PC-3 (cell line): ENCODE measurements at regions of chr2 and their contacts with region 1.

Region 1: GRCh38 chr2:102473020-102473419 is at the start of gene SLC9A4:
- DNase-seq: peak; percentile 81
- ATAC-seq: peak; percentile 53
- H3K4me3 ChIP-seq: no peak within 1 kb of the TSS
- H3K27ac ChIP-seq: no peak within 1 kb of the TSS
- H3K4me1 ChIP-seq: no peaks in the 10 kb centered on the region; the same call in 1 of the 2 replicates
- H3K27me3 ChIP-seq: no peaks in the 10 kb centered on the region
- CTCF ChIP-seq: peak; percentile 95
- total RNA-seq, gene SLC9A4: 0.04 TPM in 1 of 2 replicates, not detected in the other

Region 2: DNA sequence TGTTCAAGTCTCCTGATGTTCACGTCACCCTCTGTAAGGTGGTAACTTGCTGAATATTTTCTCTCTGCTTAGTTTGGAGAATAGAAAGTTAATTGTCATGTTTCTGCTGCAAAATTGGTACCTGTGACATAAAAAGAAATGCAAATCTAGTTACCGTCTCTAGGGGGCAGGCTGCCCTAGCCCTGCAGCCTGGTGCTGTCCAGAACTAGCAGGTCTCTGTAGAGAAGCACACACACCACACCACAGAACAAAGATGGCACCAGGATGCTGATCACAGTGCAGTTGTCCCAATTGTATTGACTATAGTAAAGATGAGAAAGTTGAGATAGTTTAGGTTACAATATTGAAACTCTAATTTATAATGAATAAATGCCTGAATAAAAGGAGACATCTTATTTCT is 47.0 kb after region 1 on chr2:
- CTCF ChIA-PET with region 1: no interaction called
- POLR2A ChIA-PET with region 1: no interaction called
- intact Hi-C with region 1: no loop called
- DNase-seq: peak; percentile 45
- ATAC-seq: 0 out of 2 replicates have a peak, but pooled peaks have one; percentile 33
- H3K4me3 ChIP-seq: no peak overlapping the region
- H3K27ac ChIP-seq: no peak overlapping the region
- H3K4me1 ChIP-seq: peaks cover 2% of the 10 kb centered on the region; the same call in 1 of the 2 replicates
- H3K27me3 ChIP-seq: no peaks in the 10 kb centered on the region
- CTCF ChIP-seq: peak; percentile 84

Region 3: GRCh38 chr2:102615622-102616436 is 142.8 kb after region 1 on chr2:
- CTCF ChIA-PET with region 1: interaction called, 7 read pairs
- POLR2A ChIA-PET with region 1: no interaction called
- intact Hi-C with region 1: loop called (anchors 1 kb)
- DNase-seq: peak; percentile 77
- ATAC-seq: peak; percentile 80
- H3K4me3 ChIP-seq: no peak overlapping the region
- H3K27ac ChIP-seq: no peak overlapping the region
- H3K4me1 ChIP-seq: peaks cover 5% of the 10 kb centered on the region; the same call in 1 of the 2 replicates
- H3K27me3 ChIP-seq: 0 out of 2 replicates have a peak, but pooled peaks cover 10% of the 10 kb centered on the region
- CTCF ChIP-seq: peak; percentile 90

Region 4: DNA sequence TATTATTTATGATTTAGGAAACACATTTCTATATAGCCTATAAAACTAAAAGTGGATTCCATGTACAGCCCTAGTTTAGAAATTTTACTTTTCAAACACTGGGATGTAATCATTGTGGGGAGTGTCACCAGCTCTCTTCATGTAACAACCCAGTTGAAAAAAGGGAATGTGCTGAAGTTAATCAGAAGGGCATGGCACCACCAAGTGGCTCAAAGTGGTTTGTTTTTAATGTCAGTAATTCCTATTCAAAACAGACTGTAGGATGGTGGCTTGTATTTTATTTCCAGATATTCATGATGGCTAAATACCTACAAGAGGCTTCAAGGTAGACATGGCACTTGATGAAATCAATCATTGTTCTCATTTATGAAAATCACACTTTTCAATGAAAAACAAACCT is 230.7 kb after region 1 on chr2:
- CTCF ChIA-PET with region 1: no interaction called
- POLR2A ChIA-PET with region 1: no interaction called
- intact Hi-C with region 1: loop called (anchors 1 kb)
- DNase-seq: peak; percentile 62
- ATAC-seq: peak; percentile 82
- H3K4me3 ChIP-seq: no peak overlapping the region
- H3K27ac ChIP-seq: no peak overlapping the region
- H3K4me1 ChIP-seq: peaks cover 5% of the 10 kb centered on the region
- H3K27me3 ChIP-seq: no peaks in the 10 kb centered on the region
- CTCF ChIP-seq: peak; percentile 82

Region 5: GRCh38 chr2:102806250-102806837 is 333.3 kb after region 1 on chr2:
- CTCF ChIA-PET with region 1: no interaction called
- POLR2A ChIA-PET with region 1: no interaction called
- intact Hi-C with region 1: loop called (anchors 1 kb)
- DNase-seq: peak; percentile 78
- ATAC-seq: peak; percentile 84
- H3K4me3 ChIP-seq: no peak overlapping the region
- H3K27ac ChIP-seq: no peak overlapping the region
- H3K4me1 ChIP-seq: peaks cover 7% of the 10 kb centered on the region; the same call in 1 of the 2 replicates
- H3K27me3 ChIP-seq: no peaks in the 10 kb centered on the region
- CTCF ChIP-seq: peak; percentile 83